CD4-positive, alpha-beta T cell (primary cell): ENCODE measurements at regions of chr1 and their contacts with region 1.

Region 1: DNA sequence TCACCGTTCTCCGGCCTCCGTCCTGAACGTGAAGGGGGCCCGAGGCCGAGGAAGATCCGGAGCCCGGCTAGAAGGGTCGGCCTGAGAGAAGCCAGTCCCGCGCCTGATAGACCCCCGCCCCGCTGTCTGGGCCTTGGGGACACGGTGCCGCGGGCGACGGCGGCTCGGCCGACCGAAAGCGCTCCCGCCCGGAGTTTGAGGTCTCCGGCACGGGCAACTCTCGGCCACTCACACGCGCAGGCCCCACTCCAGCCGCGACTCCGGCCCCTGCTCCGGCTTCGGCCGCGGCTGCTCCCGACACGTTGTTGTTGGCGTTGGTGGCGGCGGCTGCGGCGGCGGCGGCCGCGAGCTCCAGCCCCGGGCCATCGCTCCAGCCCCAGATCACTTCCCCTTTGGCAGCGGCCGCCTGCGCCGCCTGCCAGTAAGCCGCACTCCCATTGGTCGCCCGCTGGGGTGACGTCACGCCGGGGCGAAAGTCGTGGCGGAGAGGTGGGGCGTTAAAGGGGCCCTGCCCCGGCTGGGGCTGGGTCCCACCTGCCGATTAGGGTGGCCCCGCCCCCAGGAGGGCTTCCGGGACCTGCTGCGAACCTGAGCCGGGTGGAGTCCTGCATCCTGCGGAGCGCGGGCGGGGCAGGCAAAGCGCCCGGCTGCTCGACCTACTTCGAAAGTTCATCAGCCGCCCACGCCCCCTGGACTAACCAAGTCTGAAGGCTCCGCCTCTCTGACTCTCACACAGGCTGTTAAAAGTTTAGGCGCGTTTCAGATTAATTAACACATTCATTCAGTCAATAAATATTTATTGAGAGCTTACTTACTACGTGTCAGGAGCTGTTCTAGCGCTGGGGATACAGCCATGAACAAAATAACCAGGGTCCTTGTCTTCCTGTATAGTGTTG is at the start of gene EFCAB14:
- DNase-seq: peak; percentile 97 to 100 (median 99)
- ATAC-seq: peak; percentile 99
- H3K4me3 ChIP-seq: peak within 1 kb of the TSS; percentile 81
- H3K4me3 Mint-ChIP-seq: peak within 1 kb of the TSS; percentile 93
- H3K27ac ChIP-seq: peak within 1 kb of the TSS; percentile 66 to 67
- H3K27ac Mint-ChIP-seq: peak within 1 kb of the TSS; percentile 85
- H3K4me1 ChIP-seq: peaks cover 29% of the 10 kb centered on the region
- H3K4me1 Mint-ChIP-seq: peaks cover 51% of the 10 kb centered on the region
- H3K27me3 ChIP-seq: no peaks in the 10 kb centered on the region
- H3K27me3 Mint-ChIP-seq: no peaks in the 10 kb centered on the region
- CTCF ChIP-seq: no peak
- total RNA-seq, gene EFCAB14: 36.8 to 38.3 TPM

Region 2: GRCh38 chr1:46340404-46341221 is 378.4 kb before region 1 on chr1 and contains the start of gene NSUN4:
- CTCF ChIA-PET with region 1: no interaction called
- POLR2A ChIA-PET with region 1: no interaction called
- intact Hi-C with region 1: loop called in 1 of 2 experiments (anchors 5 kb)
- DNase-seq: peak; percentile 64 to 96 (median 80)
- ATAC-seq: peak; percentile 86
- H3K4me3 ChIP-seq: peak within 1 kb of the TSS; percentile 99
- H3K4me3 Mint-ChIP-seq: peak within 1 kb of the TSS; percentile 99
- H3K27ac ChIP-seq: peak within 1 kb of the TSS; percentile 91 to 99
- H3K27ac Mint-ChIP-seq: peak within 1 kb of the TSS; percentile 97
- H3K4me1 ChIP-seq: peaks cover 27% of the 10 kb centered on the region
- H3K4me1 Mint-ChIP-seq: peaks cover 52% of the 10 kb centered on the region
- H3K27me3 ChIP-seq: no peaks in the 10 kb centered on the region
- H3K27me3 Mint-ChIP-seq: no peaks in the 10 kb centered on the region
- CTCF ChIP-seq: peak; percentile 80
- total RNA-seq, gene NSUN4: 34.9 to 36.7 TPM

Region 3: GRCh38 chr1:46616277-46617107 is 102.5 kb before region 1 on chr1 and contains the start of gene MOB3C:
- CTCF ChIA-PET with region 1: no interaction called
- POLR2A ChIA-PET with region 1: interaction called, 13 read pairs
- intact Hi-C with region 1: loop called (anchors 5 kb)
- DNase-seq: peak; percentile 39 to 80 (median 61)
- ATAC-seq: peak; percentile 84
- H3K4me3 ChIP-seq: peak within 1 kb of the TSS; percentile 94
- H3K4me3 Mint-ChIP-seq: peak within 1 kb of the TSS; percentile 96
- H3K27ac ChIP-seq: peak within 1 kb of the TSS; percentile 48 to 84
- H3K27ac Mint-ChIP-seq: peak within 1 kb of the TSS; percentile 90
- H3K4me1 ChIP-seq: peaks cover 57% of the 10 kb centered on the region
- H3K4me1 Mint-ChIP-seq: peaks cover 49% of the 10 kb centered on the region
- H3K27me3 ChIP-seq: no peaks in the 10 kb centered on the region
- H3K27me3 Mint-ChIP-seq: no peaks in the 10 kb centered on the region
- CTCF ChIP-seq: no peak
- total RNA-seq, gene MOB3C: 6.7 to 7.8 TPM

Region 4: GRCh38 chr1:47313915-47314664 is 595.1 kb after region 1 on chr1 and contains the start of gene STIL:
- CTCF ChIA-PET with region 1: no interaction called
- POLR2A ChIA-PET with region 1: no interaction called
- intact Hi-C with region 1: loop called in 1 of 2 experiments (anchors 10 kb)
- DNase-seq: peak; percentile 91 to 99 (median 94)
- ATAC-seq: peak; percentile 94
- H3K4me3 ChIP-seq: peak within 1 kb of the TSS; percentile 84
- H3K4me3 Mint-ChIP-seq: peak within 1 kb of the TSS; percentile 93
- H3K27ac ChIP-seq: peak within 1 kb of the TSS; percentile 46 to 86
- H3K27ac Mint-ChIP-seq: peak within 1 kb of the TSS; percentile 91
- H3K4me1 ChIP-seq: peaks cover 11% of the 10 kb centered on the region
- H3K4me1 Mint-ChIP-seq: peaks cover 19% of the 10 kb centered on the region
- H3K27me3 ChIP-seq: no peaks in the 10 kb centered on the region
- H3K27me3 Mint-ChIP-seq: no peaks in the 10 kb centered on the region
- CTCF ChIP-seq: no peak
- total RNA-seq, gene STIL: 1.7 to 2.1 TPM